Ascending aorta (tissue), 2 donors: ENCODE measurements at regions of chr10 and their contacts with region 1.

Region 1: GRCh38 chr10:3955493-3955892 is 170.5 kb upstream of the KLF6 start:
- DNase-seq: no peak
- H3K4me3 ChIP-seq: no peak overlapping the region
- H3K27ac ChIP-seq: peak overlapping the region; percentile 22 to 29
- H3K4me1 ChIP-seq: peaks cover 0 to 26% of the 10 kb centered on the region in 2 donors
- H3K27me3 ChIP-seq: no peaks in the 10 kb centered on the region
- CTCF ChIP-seq: no peak

Region 2: GRCh38 chr10:4006051-4006450 is 50.6 kb after region 1 on chr10:
- intact Hi-C with region 1: loop called (anchors 5 kb)
- DNase-seq: no peak
- H3K4me3 ChIP-seq: no peak overlapping the region
- H3K27ac ChIP-seq: no peak overlapping the region
- H3K4me1 ChIP-seq: no peaks in the 10 kb centered on the region
- H3K27me3 ChIP-seq: no peaks in the 10 kb centered on the region
- CTCF ChIP-seq: no peak